ENCODE measurements at regions of chr19 and their contacts with region 1.

Region 1: GRCh38 chr19:51441410-51442390 is 16.6 kb downstream of the SIGLEC8 start:
- DNase-seq: peak; percentile 56 to 95 (median 81)
- ATAC-seq: peak; percentile 91
- H3K4me3 ChIP-seq: peak overlapping the region; percentile 21 to 32
- H3K4me3 Mint-ChIP-seq: peak overlapping the region; percentile 75
- H3K27ac ChIP-seq: peak overlapping the region; percentile 24 to 83
- H3K27ac Mint-ChIP-seq: peak overlapping the region; percentile 93
- H3K4me1 ChIP-seq: peaks cover 31% of the 10 kb centered on the region
- H3K4me1 Mint-ChIP-seq: peaks cover 43% of the 10 kb centered on the region
- H3K27me3 ChIP-seq: peaks cover 0 to 2% of the 10 kb centered on the region in 2 experiments
- H3K27me3 Mint-ChIP-seq: peaks cover 7% of the 10 kb centered on the region
- CTCF ChIP-seq: peak; percentile 27

Region 2: GRCh38 chr19:51296336-51297093 is 145.2 kb before region 1 on chr19:
- CTCF ChIA-PET with region 1: no interaction called
- POLR2A ChIA-PET with region 1: no interaction called
- intact Hi-C with region 1: no loop called
- DNase-seq: no peak
- ATAC-seq: no peak
- H3K4me3 ChIP-seq: no peak overlapping the region
- H3K4me3 Mint-ChIP-seq: no peak overlapping the region
- H3K27ac ChIP-seq: no peak overlapping the region
- H3K27ac Mint-ChIP-seq: no peak overlapping the region
- H3K4me1 ChIP-seq: no peaks in the 10 kb centered on the region
- H3K4me1 Mint-ChIP-seq: no peaks in the 10 kb centered on the region
- H3K27me3 ChIP-seq: no peaks in the 10 kb centered on the region
- H3K27me3 Mint-ChIP-seq: peaks cover 14% of the 10 kb centered on the region
- CTCF ChIP-seq: no peak

Region 3: DNA sequence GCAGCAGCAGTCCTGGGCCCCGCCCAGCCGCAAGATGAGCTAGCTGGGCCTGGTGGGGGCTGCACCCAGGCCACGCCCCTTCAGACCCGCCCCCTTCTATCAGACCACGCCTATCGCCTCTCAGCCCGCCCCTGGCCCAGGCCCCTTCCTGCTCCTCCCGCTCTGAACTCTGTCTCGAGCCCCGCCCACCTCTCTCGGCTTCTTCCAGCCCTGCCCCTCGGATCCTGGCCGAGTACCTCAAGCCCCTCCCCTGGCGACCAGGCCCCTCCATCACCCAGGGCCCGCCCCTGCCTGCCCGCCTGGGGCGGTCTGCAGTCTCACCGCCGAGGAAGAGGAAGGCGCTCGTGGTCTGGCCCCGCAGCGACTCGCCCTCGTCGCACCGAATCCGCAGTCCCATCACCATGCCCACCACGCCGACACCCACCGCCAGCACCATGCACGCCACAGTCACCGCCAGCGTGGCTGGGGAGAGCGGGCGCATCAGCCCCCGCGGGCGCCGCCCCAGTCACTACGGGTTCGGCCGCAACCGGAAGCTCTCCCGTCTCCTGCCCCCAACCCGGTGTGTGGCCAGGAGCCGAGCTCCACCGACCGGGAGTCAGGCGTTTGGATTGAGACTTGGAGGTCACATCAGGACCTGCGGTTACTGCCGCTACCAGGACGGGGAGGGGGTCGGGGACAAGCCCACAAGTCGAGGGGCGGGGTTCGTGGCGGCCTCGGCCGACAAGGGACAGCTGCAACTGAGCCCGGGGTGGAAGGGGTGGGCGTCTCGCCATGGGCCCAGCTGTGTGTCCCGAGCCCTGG is 73.9 kb before region 1 on chr19:
- CTCF ChIA-PET with region 1: no interaction called
- POLR2A ChIA-PET with region 1: interaction called, 4 read pairs
- intact Hi-C with region 1: loop called (anchors 1 to 2 kb)
- DNase-seq: peak; percentile 88 to 98 (median 95)
- ATAC-seq: peak; percentile 78
- H3K4me3 ChIP-seq: peak overlapping the region; percentile 74 to 77
- H3K4me3 Mint-ChIP-seq: peak overlapping the region; percentile 98
- H3K27ac ChIP-seq: peak overlapping the region; percentile 48 to 87
- H3K27ac Mint-ChIP-seq: peak overlapping the region; percentile 96
- H3K4me1 ChIP-seq: peaks cover 61% of the 10 kb centered on the region
- H3K4me1 Mint-ChIP-seq: peaks cover 72% of the 10 kb centered on the region
- H3K27me3 ChIP-seq: no peaks in the 10 kb centered on the region
- H3K27me3 Mint-ChIP-seq: no peaks in the 10 kb centered on the region
- CTCF ChIP-seq: no peak

Region 4: GRCh38 chr19:51570962-51571575 is 129.4 kb after region 1 on chr19 and contains the start of gene ZNF175:
- CTCF ChIA-PET with region 1: no interaction called
- POLR2A ChIA-PET with region 1: no interaction called
- intact Hi-C with region 1: loop called in 1 of 2 experiments (anchors 5 kb)
- DNase-seq: peak; percentile 70 to 94 (median 87)
- ATAC-seq: peak; percentile 98
- H3K4me3 ChIP-seq: peak within 1 kb of the TSS; percentile 65 to 80
- H3K4me3 Mint-ChIP-seq: peak within 1 kb of the TSS; percentile 97
- H3K27ac ChIP-seq: no peak within 1 kb of the TSS
- H3K27ac Mint-ChIP-seq: peak within 1 kb of the TSS; percentile 85
- H3K4me1 ChIP-seq: peaks cover 19% of the 10 kb centered on the region
- H3K4me1 Mint-ChIP-seq: peaks cover 41% of the 10 kb centered on the region
- H3K27me3 ChIP-seq: no peaks in the 10 kb centered on the region
- H3K27me3 Mint-ChIP-seq: peaks cover 4% of the 10 kb centered on the region
- CTCF ChIP-seq: no peak
- total RNA-seq, gene ZNF175: 0.84 to 1.4 TPM